Activated CD8-positive, alpha-beta memory T cell treated with anti-CD3 and anti-CD28 coated beads, Interleukin-2, amount 10 ng/mL, durations not matched to agents 7 days and 5 days (primary cell): ENCODE measurements at regions of chr12 and their contacts with region 1.

Region 1: GRCh38 chr12:15899282-15899870 is 11.8 kb upstream of the DERA start:
- DNase-seq: no peak
- ATAC-seq: peak; percentile 39
- H3K4me3 Mint-ChIP-seq: no peak overlapping the region
- H3K27ac Mint-ChIP-seq: peak overlapping the region; percentile 58
- H3K4me1 Mint-ChIP-seq: peaks cover 8% of the 10 kb centered on the region
- H3K27me3 Mint-ChIP-seq: no peaks in the 10 kb centered on the region

Region 2: DNA sequence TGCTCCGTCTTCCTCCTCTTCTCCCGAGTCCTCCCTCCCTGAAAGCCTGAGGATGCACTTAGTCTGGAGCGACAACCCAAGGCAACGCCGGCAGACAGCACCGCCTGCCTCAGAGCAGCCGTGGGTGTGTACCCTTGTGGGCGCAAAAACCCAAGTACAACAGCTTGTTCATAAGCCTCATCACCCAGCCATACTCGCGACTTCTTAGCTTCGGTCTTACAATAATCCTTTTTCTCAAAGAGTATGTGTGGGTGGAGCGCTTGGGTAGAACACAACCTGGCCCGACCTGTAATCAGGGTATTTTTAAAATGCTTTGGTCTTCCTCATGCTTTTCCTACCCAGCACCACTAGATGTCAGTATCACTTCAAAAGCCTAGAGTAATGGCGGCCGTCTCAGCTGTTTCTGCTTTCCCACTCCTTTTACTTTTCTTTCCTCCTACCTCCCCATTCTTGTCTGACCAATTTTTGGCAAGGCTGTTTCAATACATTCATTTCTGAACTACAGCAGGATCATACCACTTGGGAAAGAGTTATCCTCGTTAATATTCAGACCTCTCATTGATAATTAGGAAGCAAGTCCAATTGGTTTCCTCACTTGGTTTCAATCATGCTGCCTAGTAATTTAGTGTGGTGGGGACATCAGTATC is 309.1 kb before region 1 on chr12:
- CTCF ChIA-PET with region 1: interaction called, 12 read pairs
- DNase-seq: peak; percentile 60
- ATAC-seq: peak; percentile 92
- H3K4me3 Mint-ChIP-seq: peak overlapping the region; percentile 54
- H3K27ac Mint-ChIP-seq: peak overlapping the region; percentile 5
- H3K4me1 Mint-ChIP-seq: peaks cover 11% of the 10 kb centered on the region
- H3K27me3 Mint-ChIP-seq: peaks cover 39% of the 10 kb centered on the region

Region 3: GRCh38 chr12:15823360-15824128 is 75.8 kb before region 1 on chr12:
- CTCF ChIA-PET with region 1: no interaction called
- DNase-seq: no peak
- ATAC-seq: no peak
- H3K4me3 Mint-ChIP-seq: no peak overlapping the region
- H3K27ac Mint-ChIP-seq: no peak overlapping the region
- H3K4me1 Mint-ChIP-seq: peaks cover 2% of the 10 kb centered on the region
- H3K27me3 Mint-ChIP-seq: peaks cover 6% of the 10 kb centered on the region

Region 4: GRCh38 chr12:15842108-15842507 is 57.3 kb before region 1 on chr12:
- CTCF ChIA-PET with region 1: no interaction called
- DNase-seq: no peak
- ATAC-seq: no peak
- H3K4me3 Mint-ChIP-seq: no peak overlapping the region
- H3K27ac Mint-ChIP-seq: no peak overlapping the region
- H3K4me1 Mint-ChIP-seq: no peaks in the 10 kb centered on the region
- H3K27me3 Mint-ChIP-seq: peaks cover 18% of the 10 kb centered on the region

Region 5: DNA sequence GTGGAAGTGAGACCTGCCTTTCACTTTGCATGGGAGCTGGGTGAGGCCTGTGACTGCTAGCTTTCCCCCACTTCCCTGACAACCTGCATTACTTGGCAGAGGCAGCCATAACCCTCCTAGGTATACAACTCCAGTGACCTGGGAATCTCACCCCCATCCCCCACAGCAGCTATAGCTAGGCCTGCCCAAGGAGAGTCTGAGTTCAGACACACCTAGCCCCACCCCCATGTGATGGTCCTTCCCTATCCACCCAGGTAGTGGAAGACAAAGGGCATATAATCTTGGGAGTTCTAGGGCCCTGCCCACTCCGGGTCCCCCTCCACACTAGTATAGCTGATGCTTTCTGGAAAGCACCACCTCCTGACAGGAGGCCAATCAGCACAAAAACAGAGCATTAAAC is 23.5 kb before region 1 on chr12:
- CTCF ChIA-PET with region 1: interaction called, 10 read pairs
- DNase-seq: no peak
- ATAC-seq: no peak
- H3K4me3 Mint-ChIP-seq: no peak overlapping the region
- H3K27ac Mint-ChIP-seq: no peak overlapping the region
- H3K4me1 Mint-ChIP-seq: peaks cover 5% of the 10 kb centered on the region
- H3K27me3 Mint-ChIP-seq: peaks cover 3% of the 10 kb centered on the region

Region 6: DNA sequence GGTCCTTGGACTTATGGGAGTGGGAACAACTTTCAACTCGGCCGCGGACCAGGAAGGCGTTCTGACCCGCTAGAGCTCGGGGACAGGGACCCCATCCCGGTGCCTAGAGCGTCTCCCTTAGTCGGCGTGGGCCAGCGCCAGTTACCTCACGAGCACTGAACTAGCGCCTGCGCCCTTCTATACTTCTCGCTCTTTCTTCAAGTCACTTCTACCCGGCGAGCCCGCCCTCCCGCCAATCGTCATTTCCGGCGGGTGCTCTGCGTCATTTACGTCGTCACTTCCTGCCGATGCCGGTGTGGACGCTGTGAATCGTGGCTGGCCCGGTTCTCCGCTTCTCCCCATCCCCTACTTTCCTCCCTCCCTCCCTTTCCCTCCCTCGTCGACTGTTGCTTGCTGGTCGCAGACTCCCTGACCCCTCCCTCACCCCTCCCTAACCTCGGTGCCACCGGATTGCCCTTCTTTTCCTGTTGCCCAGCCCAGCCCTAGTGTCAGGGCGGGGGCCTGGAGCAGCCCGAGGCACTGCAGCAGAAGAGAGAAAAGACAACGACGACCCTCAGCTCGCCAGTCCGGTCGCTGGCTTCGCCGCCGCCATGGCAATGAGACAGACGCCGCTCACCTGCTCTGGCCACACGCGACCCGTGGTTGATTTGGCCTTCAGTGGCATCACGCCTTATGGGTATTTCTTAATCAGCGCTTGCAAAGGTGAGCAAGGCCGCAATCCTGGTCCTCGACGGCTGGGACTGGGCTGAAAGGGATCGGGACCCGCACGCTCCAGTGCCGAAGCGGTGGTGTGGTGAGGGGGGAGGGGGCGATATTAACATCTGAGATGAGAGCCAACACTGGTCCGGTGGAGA is 17.0 kb before region 1 on chr12 and contains the start of gene STRAP:
- CTCF ChIA-PET with region 1: interaction called, 16 read pairs
- DNase-seq: peak; percentile 97
- ATAC-seq: peak; percentile 95
- H3K4me3 Mint-ChIP-seq: peak within 1 kb of the TSS; percentile 98
- H3K27ac Mint-ChIP-seq: peak within 1 kb of the TSS; percentile 99
- H3K4me1 Mint-ChIP-seq: peaks cover 48% of the 10 kb centered on the region
- H3K27me3 Mint-ChIP-seq: no peaks in the 10 kb centered on the region
- total RNA-seq, gene STRAP: 70.2 to 96.3 TPM

Region 7: DNA sequence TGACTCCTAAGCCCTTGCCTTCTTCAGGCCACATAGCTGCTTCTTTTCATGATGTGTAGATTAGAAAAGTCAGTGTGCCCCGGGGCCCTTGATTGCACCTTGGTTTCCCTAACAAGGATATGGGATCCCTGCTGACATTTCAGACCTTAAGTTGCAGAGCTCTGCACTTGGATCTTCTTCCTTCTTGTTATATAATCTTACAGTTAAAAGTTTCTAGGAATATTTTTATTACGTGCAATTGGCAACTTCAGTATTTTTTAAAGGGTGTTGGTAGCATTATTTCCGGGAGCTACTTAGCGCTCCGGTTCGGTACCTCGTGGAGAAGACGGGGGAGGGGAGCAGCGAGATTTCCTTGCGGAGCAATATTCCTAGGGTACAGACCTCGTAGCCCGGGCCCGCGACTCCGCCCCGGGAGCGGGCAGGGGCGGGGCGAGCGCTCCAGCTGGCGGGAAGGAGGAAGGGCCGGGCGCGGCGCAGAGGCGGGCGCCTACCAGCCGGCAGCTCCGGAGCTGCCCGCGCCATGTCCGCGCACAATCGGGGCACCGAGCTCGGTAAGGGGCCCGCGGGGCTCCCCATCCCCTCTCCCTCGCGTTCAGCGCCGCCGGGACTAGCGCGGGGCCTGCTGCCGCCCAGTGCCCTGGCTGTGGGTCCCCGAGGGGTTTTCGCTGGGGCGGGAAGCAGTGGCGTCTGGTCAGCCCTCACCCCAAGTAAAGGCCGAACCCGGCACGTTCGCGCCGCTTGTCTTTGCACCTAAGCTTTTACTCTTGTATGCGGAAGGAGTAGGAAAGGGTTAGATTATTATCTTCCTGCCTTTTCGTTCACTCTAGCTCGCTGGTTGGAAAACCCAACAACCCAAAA is 11.7 kb after region 1 on chr12 and contains the start of gene DERA:
- CTCF ChIA-PET with region 1: interaction called, 25 read pairs
- DNase-seq: peak; percentile 65
- ATAC-seq: peak; percentile 96
- H3K4me3 Mint-ChIP-seq: peak within 1 kb of the TSS; percentile 87
- H3K27ac Mint-ChIP-seq: peak within 1 kb of the TSS; percentile 85
- H3K4me1 Mint-ChIP-seq: peaks cover 16% of the 10 kb centered on the region
- H3K27me3 Mint-ChIP-seq: no peaks in the 10 kb centered on the region
- total RNA-seq, gene DERA: 22.3 to 24.1 TPM